Posterior vena cava (tissue), 2 donors: ENCODE measurements at regions of chr11 and their contacts with region 1.

Region 1: DNA sequence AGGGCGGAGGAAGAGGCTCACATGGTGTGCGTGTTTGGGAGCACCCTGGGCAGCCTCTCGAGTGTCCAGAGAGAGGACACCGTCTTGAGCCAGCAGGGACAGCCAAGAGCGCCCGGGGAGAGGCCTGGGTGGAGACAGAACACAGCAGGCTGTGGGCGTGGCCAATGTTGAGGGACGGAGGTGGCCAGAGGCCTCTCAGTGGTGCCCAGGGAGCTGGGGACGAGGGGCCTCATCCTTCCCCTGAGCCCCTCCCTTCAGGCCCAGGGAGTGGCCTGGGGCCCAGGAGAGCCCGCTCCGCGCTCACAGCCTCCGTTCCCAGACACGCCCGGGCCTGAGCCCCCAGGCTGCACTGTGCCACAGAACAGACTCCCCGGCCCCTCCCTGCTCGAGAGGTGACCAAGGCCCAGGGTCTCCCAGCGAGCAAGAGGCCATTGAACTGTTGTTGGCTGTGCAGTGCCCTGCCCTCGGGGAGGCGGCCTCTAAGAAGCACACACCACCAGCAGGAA is 48.4 kb downstream of the CDKN1C start:
- DNase-seq: peak; percentile 94

Region 2: GRCh38 chr11:1060824-1061616 is 1776.1 kb before region 1 on chr11:
- intact Hi-C with region 1: loop called in 1 of 2 experiments (anchors 5 kb)
- DNase-seq: peak; percentile 85

Region 3: GRCh38 chr11:2892215-2893020 is 55.3 kb after region 1 on chr11:
- intact Hi-C with region 1: no loop called
- DNase-seq: no peak